ENCODE measurements at regions of chr20 and their contacts with region 1.

Region 1: DNA sequence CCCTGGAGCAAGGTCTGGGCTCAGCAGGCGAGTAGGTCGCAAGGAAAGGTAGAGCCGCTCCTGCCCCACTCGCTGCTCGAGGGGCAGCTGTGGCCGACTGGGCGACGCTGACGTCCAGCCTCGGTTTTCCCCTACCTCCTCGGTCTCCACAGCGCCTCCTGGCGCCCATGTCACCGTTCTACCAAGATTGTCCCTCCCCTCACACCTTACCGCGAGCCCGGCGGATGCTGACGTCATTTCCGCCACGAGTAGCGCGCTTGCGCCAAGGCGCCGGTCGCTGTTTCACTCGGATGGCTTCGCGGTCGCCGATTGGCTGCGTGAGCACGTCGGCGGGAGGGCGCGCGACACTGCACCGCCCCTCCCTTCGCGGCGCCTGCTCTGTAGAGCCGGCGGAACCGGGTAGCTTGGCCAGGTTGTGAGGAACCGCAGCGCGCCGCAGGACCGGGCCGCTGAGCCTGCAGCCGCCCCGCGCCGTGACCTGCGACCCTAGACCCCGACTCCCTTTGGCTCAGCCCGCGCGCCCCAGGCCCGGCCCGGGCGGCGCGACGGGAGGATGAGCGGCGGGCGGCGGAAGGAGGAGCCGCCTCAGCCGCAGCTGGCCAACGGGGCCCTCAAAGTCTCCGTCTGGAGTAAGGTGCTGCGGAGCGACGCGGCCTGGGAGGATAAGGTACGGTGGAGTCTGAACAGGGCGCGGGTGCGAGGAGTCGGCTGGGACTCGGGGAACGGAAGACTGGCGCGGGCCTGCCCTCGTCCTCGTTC is at the start of gene RAB5IF:
- DNase-seq: peak; percentile 98 to 99 (median 99)
- ATAC-seq: peak; percentile 94
- H3K4me3 ChIP-seq: peak within 1 kb of the TSS; percentile 89
- H3K4me3 Mint-ChIP-seq: peak within 1 kb of the TSS; percentile 95 to 99 (median 96)
- H3K27ac ChIP-seq: peak within 1 kb of the TSS; percentile 91
- H3K27ac Mint-ChIP-seq: peak within 1 kb of the TSS; percentile 94 to 99 (median 96)
- H3K4me1 ChIP-seq: peaks cover 16 to 20% of the 10 kb centered on the region in 2 donors
- H3K4me1 Mint-ChIP-seq: peaks cover 12 to 38% (median 28%) of the 10 kb centered on the region in 7 donors
- H3K27me3 ChIP-seq: no peaks in the 10 kb centered on the region
- H3K27me3 Mint-ChIP-seq: peaks cover 0 to 3% (median 0%) of the 10 kb centered on the region in 5 donors
- total RNA-seq, gene RAB5IF: 47.9 to 100 (median 53.1) TPM

Region 2: DNA sequence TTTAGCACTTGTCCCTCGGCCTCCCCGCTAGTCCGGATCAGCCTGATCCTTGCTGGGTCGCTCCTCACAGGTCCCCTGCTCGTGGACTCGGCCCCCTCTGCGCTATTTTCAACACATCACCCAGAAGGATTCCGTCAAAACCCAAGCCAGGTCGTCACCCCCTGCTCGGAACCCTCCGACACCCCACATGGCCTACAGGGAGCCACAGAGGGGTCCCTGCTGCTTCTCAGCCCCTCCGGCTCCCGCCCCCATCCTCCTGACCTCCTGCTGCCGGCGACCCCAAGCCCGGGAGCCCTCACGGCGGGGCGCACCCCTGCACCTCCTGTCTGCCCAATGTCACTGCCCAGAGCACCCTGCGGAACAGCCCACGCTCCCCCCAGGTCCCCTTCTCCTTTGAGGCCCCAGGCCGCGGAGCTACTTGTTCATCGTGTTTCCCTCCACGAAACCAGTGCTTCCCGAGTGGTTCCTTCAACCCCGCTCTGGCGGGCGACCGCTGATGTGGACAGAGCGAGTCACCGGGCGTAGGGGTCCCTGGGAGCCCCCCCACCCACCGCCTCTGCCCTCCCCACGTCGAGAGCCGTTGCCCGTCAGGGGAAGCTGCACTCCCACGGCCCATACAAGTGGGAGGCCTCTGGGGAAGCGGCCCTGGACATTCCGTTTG is 64.9 kb before region 1 on chr20:
- CTCF ChIA-PET with region 1: no interaction called
- POLR2A ChIA-PET with region 1: no interaction called
- intact Hi-C with region 1: no loop called
- DNase-seq: no peak
- ATAC-seq: no peak
- H3K4me3 ChIP-seq: no peak overlapping the region
- H3K4me3 Mint-ChIP-seq: peak overlapping the region in 2 of 10 donors; percentile 30 to 36
- H3K27ac ChIP-seq: no peak overlapping the region
- H3K27ac Mint-ChIP-seq: peak overlapping the region in 1 of 9 donors; percentile 9
- H3K4me1 ChIP-seq: no peaks in the 10 kb centered on the region
- H3K4me1 Mint-ChIP-seq: peaks cover 0 to 3% (median 0%) of the 10 kb centered on the region in 7 donors
- H3K27me3 ChIP-seq: no peaks in the 10 kb centered on the region
- H3K27me3 Mint-ChIP-seq: peaks cover 0 to 9% (median 0%) of the 10 kb centered on the region in 5 donors

Region 3: GRCh38 chr20:36550797-36551299 is 54.7 kb before region 1 on chr20:
- CTCF ChIA-PET with region 1: interaction called, 3 read pairs
- POLR2A ChIA-PET with region 1: interaction called, 4 read pairs
- intact Hi-C with region 1: loop called (anchors 1 kb)
- DNase-seq: no peak
- ATAC-seq: no peak
- H3K4me3 ChIP-seq: no peak overlapping the region
- H3K4me3 Mint-ChIP-seq: no peak overlapping the region
- H3K27ac ChIP-seq: no peak overlapping the region
- H3K27ac Mint-ChIP-seq: peak overlapping the region in 1 of 9 donors; percentile 60
- H3K4me1 ChIP-seq: no peaks in the 10 kb centered on the region
- H3K4me1 Mint-ChIP-seq: peaks cover 0 to 5% (median 2%) of the 10 kb centered on the region in 7 donors
- H3K27me3 ChIP-seq: no peaks in the 10 kb centered on the region
- H3K27me3 Mint-ChIP-seq: no peaks in the 10 kb centered on the region

Region 4: DNA sequence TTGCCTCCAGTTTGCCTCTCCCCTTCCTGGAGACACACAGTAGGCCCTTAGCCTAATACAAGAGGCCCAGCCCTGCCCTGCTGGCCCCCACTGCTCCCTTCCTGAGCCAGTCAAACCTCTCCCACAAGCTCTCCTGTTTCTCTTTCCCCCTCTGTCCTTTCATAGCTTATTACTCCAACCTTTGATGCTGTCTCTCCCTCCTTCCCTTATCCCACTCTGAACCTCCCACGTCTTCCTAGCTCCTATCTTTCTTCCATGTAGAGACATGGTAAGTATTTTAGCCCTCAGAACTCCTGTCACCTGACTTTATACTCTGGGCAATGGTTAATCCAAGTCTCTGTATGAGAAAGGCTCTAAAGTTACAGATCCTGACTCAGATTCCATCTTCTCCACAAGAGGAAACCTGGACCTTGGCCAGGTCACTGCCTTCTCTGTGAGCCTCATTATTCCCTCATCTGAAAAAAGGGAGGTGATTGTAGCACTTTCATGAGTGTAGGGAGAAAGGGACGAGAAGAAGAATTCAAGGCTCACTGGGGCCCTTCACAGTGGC is 25.5 kb before region 1 on chr20:
- CTCF ChIA-PET with region 1: interaction called, 24 read pairs
- POLR2A ChIA-PET with region 1: interaction called, 123 read pairs
- intact Hi-C with region 1: no loop called
- DNase-seq: no peak
- ATAC-seq: no peak
- H3K4me3 ChIP-seq: no peak overlapping the region
- H3K4me3 Mint-ChIP-seq: peak overlapping the region in 2 of 10 donors; percentile 23 to 42
- H3K27ac ChIP-seq: no peak overlapping the region
- H3K27ac Mint-ChIP-seq: peak overlapping the region in 8 of 9 donors; percentile 20 to 86 (median 72)
- H3K4me1 ChIP-seq: peaks cover 5 to 24% of the 10 kb centered on the region in 2 donors
- H3K4me1 Mint-ChIP-seq: peaks cover 19 to 44% (median 33%) of the 10 kb centered on the region in 7 donors
- H3K27me3 ChIP-seq: no peaks in the 10 kb centered on the region
- H3K27me3 Mint-ChIP-seq: no peaks in the 10 kb centered on the region

Region 5: DNA sequence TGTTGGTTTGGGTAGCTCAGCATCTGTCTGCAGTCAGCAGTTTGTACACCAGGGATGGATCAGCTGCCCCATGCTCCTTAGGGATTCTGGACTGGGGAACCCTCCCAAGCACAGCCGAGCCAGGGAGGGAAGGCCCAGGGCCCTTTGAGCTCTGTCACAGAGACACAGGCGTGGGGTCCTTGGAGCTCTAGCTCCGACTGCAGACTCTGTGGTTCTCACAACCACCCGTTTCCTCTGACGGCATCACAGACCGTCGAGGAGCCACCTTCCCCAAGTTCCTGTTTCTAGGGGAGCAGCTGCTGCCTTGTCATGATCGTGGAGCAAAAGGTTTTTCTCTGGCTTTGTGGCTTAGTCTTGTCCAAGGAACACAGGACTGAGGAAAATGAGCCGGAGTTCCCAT is 40.4 kb after region 1 on chr20 and contains the start of gene SLA2:
- CTCF ChIA-PET with region 1: interaction called, 16 read pairs
- POLR2A ChIA-PET with region 1: interaction called, 46 read pairs
- intact Hi-C with region 1: loop called (anchors 1 to 2 kb)
- DNase-seq: peak; percentile 36 to 75 (median 67)
- ATAC-seq: peak; percentile 92
- H3K4me3 ChIP-seq: peak within 1 kb of the TSS; percentile 82
- H3K4me3 Mint-ChIP-seq: peak within 1 kb of the TSS; percentile 93 to 100 (median 99)
- H3K27ac ChIP-seq: peak within 1 kb of the TSS; percentile 85
- H3K27ac Mint-ChIP-seq: peak within 1 kb of the TSS; percentile 94 to 99 (median 97)
- H3K4me1 ChIP-seq: peaks cover 30 to 35% of the 10 kb centered on the region in 2 donors
- H3K4me1 Mint-ChIP-seq: peaks cover 31 to 67% (median 58%) of the 10 kb centered on the region in 7 donors
- H3K27me3 ChIP-seq: no peaks in the 10 kb centered on the region
- H3K27me3 Mint-ChIP-seq: no peaks in the 10 kb centered on the region
- total RNA-seq, gene SLA2: 28.3 to 80.7 (median 29.7) TPM

Region 6: DNA sequence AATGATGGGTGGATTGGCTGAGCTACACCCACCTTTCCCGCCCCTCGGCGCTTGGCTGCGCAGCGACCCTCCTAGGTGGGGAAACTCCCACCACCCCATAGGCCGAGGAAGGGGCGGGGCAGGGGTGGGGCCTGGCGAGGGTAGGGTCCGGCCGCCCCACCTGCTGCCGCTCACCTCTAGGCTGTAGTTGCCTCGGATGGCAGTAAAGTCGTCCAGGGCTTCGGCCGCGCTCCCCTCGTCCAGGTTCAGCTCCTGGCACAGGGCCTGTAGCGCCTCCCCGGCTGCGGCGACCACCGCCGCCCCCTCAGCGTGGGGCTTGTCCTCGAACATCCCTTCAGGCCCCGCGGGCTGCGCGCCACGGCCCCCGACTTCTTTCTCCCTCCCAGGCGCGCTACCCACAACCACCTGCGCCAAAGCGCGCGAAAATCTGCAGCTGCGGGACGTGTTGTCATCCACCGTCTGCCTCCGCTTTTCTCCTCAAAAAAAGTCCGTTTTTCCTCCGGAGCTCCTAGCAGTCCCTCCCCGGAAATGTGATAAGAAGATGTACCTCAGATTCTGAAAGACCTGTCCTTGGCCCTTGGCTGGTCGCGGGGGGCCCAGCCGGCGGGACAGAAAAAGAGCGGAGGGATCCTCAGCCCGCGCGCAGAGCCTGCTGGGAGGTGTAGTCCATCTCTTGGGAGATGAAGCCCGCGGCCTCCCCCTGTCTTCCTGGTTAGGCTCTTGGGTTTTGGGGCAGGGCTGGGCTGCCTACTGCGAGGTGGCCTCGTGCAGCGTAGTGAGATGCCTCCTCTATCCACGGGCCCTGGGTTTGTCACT is 490.2 kb after region 1 on chr20 and contains the start of gene RBL1:
- CTCF ChIA-PET with region 1: no interaction called
- POLR2A ChIA-PET with region 1: no interaction called
- intact Hi-C with region 1: loop called in 1 of 2 experiments (anchors 1 kb)
- DNase-seq: peak; percentile 72 to 93 (median 91)
- ATAC-seq: peak; percentile 91
- H3K4me3 ChIP-seq: peak within 1 kb of the TSS; percentile 93
- H3K4me3 Mint-ChIP-seq: peak within 1 kb of the TSS; percentile 88 to 100 (median 98)
- H3K27ac ChIP-seq: peak within 1 kb of the TSS; percentile 91
- H3K27ac Mint-ChIP-seq: peak within 1 kb of the TSS; percentile 96 to 100 (median 100)
- H3K4me1 ChIP-seq: peaks cover 17 to 18% of the 10 kb centered on the region in 2 donors
- H3K4me1 Mint-ChIP-seq: peaks cover 15 to 42% (median 34%) of the 10 kb centered on the region in 7 donors
- H3K27me3 ChIP-seq: no peaks in the 10 kb centered on the region
- H3K27me3 Mint-ChIP-seq: peaks cover 0 to 6% (median 0%) of the 10 kb centered on the region in 5 donors
- total RNA-seq, gene RBL1: 27.4 to 51.2 (median 30.6) TPM

Region 7: DNA sequence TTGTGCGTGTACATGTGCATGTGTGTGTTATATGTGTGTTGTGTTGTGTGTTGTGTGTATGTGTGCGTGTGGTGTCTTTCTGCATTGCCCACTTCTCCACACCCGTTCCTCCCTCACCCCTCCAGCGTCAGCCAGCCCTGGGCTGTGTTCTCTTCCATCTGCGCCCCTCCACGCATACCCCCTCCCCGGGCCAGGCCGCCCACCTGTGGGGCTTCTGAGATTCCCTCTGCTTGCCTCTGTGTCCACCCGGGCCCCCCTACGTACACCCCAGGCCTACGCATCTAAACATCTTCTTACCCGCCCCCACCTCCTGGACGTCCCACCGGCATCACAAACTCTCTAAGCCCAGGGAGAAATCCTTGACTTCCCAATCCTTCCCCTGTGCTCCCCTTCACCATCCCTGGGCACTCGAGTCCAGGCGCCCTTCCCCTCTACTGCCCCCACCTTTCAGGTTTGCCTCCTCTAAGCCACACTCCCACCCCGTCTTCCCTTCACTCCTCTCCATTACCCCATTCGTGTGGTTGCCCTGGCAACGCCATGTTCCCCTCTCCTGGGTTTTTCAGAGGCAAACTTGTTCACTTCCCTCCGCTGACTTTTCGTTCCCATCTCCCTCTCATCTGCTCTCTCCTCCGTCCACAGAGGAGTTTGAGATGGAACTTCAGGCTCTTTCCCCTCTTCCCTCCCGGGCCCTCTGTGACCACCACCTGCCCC is 833.8 kb after region 1 on chr20:
- CTCF ChIA-PET with region 1: no interaction called
- POLR2A ChIA-PET with region 1: no interaction called
- intact Hi-C with region 1: no loop called
- DNase-seq: no peak
- ATAC-seq: no peak
- H3K4me3 ChIP-seq: no peak overlapping the region
- H3K4me3 Mint-ChIP-seq: no peak overlapping the region
- H3K27ac ChIP-seq: no peak overlapping the region
- H3K27ac Mint-ChIP-seq: no peak overlapping the region
- H3K4me1 ChIP-seq: no peaks in the 10 kb centered on the region
- H3K4me1 Mint-ChIP-seq: no peaks in the 10 kb centered on the region
- H3K27me3 ChIP-seq: no peaks in the 10 kb centered on the region
- H3K27me3 Mint-ChIP-seq: no peaks in the 10 kb centered on the region